ENCODE measurements at regions of chr18 and their contacts with region 1.

Region 1: DNA sequence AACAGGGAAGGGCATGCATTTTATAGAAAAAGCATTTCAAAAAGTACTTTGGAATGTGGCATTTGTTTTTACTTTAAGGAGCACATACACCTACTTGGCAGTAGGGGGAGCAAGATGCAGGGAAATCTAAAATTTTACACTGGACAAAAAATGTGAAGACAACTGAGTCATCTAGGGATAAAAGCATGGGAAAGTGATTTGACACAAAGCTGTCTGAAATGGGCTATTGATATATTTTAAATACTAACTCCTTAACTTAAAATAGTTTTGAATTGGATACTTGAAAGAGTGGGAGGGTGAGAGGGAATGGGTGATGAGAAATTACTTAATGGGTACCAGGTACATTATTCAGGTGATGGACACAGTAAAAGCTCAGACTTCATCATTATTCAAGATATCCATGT is 15.8 kb downstream of the TMEM200C start:
- DNase-seq: no peak
- ATAC-seq: no peak

Region 2: DNA sequence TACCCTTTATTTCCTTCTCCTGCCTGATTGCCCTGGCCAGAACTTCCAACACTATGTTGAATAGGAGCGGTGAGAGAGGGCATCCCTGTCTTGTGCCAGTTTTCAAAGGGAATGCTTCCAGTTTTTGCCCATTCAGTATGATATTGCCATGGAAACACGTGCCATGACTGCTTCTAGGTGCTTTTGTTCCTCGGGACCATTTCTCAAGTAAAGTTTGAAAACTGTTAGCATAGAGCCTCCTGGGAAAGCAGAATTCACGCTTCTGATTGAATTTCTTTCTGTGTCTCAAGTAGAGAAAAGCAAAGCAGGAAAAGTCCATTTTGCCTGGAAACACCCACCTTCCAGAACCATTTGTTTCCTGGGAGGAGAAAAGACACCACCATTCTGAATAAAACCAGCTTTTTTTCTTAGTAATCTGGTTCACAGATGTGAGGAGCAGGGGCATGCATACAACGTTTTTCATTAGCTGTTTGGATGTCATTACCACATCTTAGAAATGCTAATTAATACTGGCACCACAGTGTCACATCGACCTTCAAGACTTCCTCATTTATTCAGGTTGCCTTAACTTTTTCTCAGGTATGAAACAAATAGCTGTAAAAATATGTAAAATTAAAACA is 544.9 kb before region 1 on chr18:
- intact Hi-C with region 1: no loop called
- DNase-seq: no peak
- ATAC-seq: no peak

Region 3: GRCh38 chr18:6482198-6482977 is 602.9 kb after region 1 on chr18:
- intact Hi-C with region 1: loop called in 1 of 2 experiments (anchors 10 kb)
- DNase-seq: peak; percentile 29 to 36
- ATAC-seq: peak; percentile 84

Region 4: GRCh38 chr18:6891788-6892187 is 1012.3 kb after region 1 on chr18:
- intact Hi-C with region 1: loop called in 1 of 2 experiments (anchors 10 kb)
- DNase-seq: no peak
- ATAC-seq: no peak